ENCODE measurements at regions of chr11 and their contacts with region 1.

Region 1: DNA sequence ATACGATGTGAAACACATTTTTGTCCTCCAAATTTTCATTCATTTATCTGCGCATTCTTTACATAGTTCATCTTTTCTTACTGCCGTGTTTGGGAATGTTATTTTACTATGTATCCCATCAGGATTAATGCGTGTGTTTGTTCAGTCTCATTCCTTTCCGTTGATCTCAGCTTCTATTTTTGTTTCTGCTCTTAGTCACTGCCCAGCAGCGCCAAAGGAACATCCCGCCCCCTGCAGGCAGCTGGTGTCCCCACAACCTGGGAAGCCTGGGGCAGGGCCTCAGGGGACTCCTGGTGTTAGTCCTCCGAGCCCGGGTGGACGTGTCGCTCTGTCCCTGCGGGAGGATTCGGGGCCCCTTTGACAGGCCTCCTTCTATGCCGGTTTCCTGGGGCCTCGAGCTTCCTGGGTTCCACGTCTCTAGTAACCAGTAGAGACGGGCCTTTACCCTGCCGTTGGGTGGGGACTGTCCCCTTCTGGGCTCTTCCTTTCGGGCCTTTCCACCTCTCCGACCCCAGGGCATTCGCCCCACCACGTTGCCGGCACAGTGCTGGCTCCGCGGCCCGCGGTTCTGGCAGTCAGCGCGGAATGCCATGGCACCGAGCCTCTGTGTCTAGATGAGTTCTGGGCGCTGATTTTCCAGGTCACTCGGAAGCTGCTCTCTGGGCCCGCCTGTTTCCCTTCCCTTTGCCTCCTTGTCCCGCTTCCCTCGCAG is 39.8 kb downstream of the WEE1 start:
- DNase-seq: peak; percentile 83 to 96
- H3K4me3 ChIP-seq: peak overlapping the region; percentile 26 to 55 (median 42)
- H3K27ac ChIP-seq: peak overlapping the region; percentile 57; the same call in 1 of the 2 replicates
- H3K4me1 ChIP-seq: peaks cover 0 to 7% (median 2%) of the 10 kb centered on the region in 4 experiments; a peak in 4 of 7 replicates
- H3K27me3 ChIP-seq: peaks cover 0 to 2% (median 0%) of the 10 kb centered on the region in 4 experiments; a peak in 3 of 7 replicates
- CTCF ChIP-seq: peak; percentile 85 to 90 (median 89)
- EP300 ChIP-seq: peak in 1 of 2 experiments; percentile 76; a peak in 1 of 3 replicates
- POLR2A ChIP-seq: peak in 1 of 2 experiments; percentile 63; a peak in 1 of 3 replicates
- RAD21 ChIP-seq: peak; percentile 78 to 81

Region 2: GRCh38 chr11:9594267-9595046 is 18.8 kb before region 1 on chr11:
- CTCF ChIA-PET with region 1: interaction called, 48 read pairs
- POLR2A ChIA-PET with region 1: interaction called, 10 read pairs
- DNase-seq: peak in 1 of 2 experiments; percentile 49
- H3K4me3 ChIP-seq: no peak overlapping the region
- H3K27ac ChIP-seq: no peak overlapping the region
- H3K4me1 ChIP-seq: no peaks in the 10 kb centered on the region; a peak in 4 of 7 replicates
- H3K27me3 ChIP-seq: peaks cover 0 to 1% (median 0%) of the 10 kb centered on the region in 4 experiments; a peak in 1 of 7 replicates
- CTCF ChIP-seq: no peak
- EP300 ChIP-seq: no peak
- POLR2A ChIP-seq: no peak
- RAD21 ChIP-seq: no peak

Region 3: DNA sequence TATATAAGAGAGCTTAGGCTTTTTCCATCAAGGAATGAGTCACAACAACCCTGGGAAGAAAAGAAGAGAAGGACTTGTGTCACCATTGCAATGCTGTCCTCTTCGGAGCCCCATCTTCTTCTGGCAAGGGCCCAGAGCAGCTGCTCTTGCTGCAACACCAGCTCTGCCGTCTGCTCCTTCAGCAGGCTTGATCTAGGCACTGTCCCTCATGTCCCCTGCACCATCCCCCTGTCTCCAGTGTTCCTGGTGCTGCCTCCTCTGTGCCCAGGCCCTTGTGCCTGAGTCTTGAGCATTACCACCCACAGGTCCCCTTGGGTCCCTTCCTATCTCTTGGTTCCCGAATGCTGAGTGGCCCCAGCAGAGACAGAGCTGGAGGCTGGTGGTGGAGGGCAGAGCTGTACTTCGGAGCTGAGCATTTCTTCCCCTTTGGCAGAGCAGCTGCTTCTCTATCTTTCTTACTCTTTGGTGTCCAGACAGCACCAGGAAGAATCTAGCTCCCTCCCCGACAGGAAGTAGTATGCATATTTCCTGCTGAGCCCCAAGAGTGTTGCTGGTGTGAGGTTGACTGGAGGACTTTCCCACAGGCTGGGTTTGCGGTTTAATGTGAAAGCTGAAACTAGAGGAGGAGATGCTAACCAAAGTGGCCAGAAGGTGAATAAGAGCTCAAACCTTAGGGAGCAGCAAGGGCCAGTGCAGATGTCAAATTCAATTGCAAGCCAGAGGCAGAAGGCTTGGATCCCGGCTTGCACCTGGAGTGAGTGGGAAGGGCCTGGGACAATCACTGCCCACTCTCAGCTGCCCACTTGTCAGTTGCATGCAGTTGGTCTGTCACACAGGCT is 12.0 kb before region 1 on chr11:
- CTCF ChIA-PET with region 1: interaction called, 48 read pairs
- POLR2A ChIA-PET with region 1: interaction called, 10 read pairs
- DNase-seq: peak in 1 of 2 experiments; percentile 52
- H3K4me3 ChIP-seq: no peak overlapping the region
- H3K27ac ChIP-seq: no peak overlapping the region; the same call in 1 of the 2 replicates
- H3K4me1 ChIP-seq: peaks cover 3 to 10% (median 6%) of the 10 kb centered on the region in 4 experiments; a peak in 6 of 7 replicates
- H3K27me3 ChIP-seq: no peaks in the 10 kb centered on the region; a peak in 1 of 7 replicates
- CTCF ChIP-seq: no peak
- EP300 ChIP-seq: no peak
- POLR2A ChIP-seq: no peak
- RAD21 ChIP-seq: no peak

Region 4: DNA sequence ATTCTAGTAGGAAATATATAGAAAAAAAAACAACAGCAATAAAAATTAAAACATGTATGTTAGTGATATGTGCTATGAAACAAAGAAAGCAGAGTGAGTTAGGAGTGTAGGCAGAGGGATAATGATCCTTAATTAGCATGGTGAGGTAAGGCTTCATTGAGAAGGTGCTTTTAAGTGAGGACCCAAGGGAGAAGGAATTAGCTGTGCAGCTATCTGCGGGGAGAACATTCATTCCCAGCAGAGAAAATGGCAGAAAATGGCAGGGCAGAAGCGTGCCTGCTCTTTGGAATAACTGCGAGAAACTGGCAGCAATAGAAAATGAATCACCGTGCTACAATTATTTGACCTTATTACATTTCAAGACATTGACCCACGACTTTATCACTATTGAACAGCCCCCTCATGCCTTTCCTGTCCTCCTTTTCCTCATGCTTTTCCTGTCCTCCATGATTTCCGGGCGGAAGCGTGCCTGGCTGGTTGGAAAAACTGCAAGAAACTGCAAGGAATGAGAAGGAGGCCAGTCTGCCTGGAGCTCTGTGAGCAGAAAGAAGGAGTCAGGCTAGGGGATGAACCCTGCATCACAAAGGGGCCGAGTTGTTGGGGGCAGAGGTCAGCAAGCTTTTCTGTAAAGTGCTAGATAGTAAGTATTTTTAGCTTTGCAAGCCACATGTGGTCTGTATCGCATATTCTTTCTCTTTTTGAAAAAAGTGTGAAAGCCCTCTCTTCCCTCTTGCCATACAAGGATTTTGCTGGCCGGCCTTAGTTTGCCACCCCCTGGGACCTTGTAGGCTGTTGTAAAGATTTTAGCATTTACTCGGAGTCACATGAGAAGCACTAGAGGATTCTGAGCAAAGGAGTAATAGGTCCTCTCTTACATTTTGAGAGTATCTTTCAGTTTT is 13.5 kb after region 1 on chr11:
- CTCF ChIA-PET with region 1: interaction called, 12 read pairs
- POLR2A ChIA-PET with region 1: interaction called, 12 read pairs
- DNase-seq: peak; percentile 61 to 65
- H3K4me3 ChIP-seq: peak overlapping the region in 1 of 4 experiments; percentile 35; a peak in 2 of 8 replicates
- H3K27ac ChIP-seq: peak overlapping the region; percentile 76; the same call in 1 of the 2 replicates
- H3K4me1 ChIP-seq: peaks cover 4 to 26% (median 18%) of the 10 kb centered on the region in 4 experiments
- H3K27me3 ChIP-seq: no peaks in the 10 kb centered on the region
- CTCF ChIP-seq: no peak
- EP300 ChIP-seq: no peak
- POLR2A ChIP-seq: peak in 1 of 2 experiments; percentile 74; a peak in 1 of 3 replicates
- RAD21 ChIP-seq: 0 out of 4 replicates have a peak, but pooled peaks have one; percentile 1 to 10